Left cardiac atrium (tissue), 4 donors: ENCODE measurements at regions of chr4 and their contacts with region 1.

Region 1: DNA sequence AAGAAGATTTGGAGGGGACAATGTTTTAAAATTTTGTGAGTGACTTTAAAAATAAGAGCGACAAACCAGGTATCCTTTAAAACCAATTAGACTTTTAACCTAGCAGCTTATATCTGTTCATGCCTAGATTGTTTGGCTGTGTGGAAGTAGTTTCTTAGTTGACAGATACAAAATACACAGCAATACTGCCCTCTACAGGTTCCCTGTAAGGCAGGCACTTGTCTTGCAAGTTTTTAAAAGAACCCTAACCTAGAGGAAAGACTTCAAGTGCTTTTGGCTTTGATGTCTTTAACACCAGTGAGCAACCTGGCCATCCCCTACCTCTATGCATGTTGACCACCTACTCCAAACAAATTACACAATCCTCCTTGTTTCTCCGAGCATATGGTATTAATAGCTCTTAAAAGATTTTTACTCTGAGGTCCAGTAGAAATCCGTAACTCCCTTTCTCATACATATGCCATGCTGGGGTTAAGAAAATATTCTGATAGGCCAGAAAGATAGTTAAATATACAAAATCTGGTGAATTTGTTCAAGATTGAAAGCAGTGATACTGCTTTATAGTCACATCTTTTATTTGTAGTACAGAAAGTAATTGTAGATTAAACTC is 273.0 kb downstream of the ARHGAP24 start:
- DNase-seq: no peak
- ATAC-seq: peak; percentile 71

Region 2: GRCh38 chr4:84985952-84986351 is 762.0 kb before region 1 on chr4:
- intact Hi-C with region 1: no loop called
- DNase-seq: no peak
- ATAC-seq: no peak

Region 3: DNA sequence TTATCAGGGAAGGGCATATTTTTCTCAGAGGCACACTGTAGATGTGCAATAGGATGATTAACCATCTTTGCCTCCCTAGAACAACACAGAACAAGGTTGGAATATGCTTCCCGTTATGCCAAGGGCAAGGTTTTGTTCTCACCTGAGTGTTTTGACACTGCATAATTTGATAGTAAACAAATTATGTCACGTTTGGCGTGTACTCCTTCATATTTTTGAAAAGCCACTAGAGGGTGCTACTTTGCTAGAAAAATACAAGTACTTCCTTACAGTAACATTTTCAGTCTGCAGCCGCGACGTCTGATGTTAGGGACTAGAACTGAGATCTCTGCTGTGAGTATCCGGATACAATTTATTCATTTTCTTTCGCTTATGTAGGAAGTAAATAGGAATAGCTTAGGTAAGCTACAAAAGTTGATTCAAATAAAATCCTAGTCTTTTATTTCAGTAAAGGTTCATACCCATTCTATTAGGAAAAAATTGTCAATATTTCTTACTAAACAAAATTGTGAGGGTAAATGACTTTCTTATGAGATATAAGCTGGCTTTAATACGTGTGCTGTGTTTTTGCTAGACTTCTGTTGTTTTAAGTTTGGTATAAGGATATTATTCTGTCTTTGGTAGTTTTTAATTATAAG is 600.4 kb before region 1 on chr4:
- intact Hi-C with region 1: loop called in 1 of 2 experiments (anchors 5 kb)
- DNase-seq: peak; percentile 47
- ATAC-seq: peak; percentile 83 to 85

Region 4: DNA sequence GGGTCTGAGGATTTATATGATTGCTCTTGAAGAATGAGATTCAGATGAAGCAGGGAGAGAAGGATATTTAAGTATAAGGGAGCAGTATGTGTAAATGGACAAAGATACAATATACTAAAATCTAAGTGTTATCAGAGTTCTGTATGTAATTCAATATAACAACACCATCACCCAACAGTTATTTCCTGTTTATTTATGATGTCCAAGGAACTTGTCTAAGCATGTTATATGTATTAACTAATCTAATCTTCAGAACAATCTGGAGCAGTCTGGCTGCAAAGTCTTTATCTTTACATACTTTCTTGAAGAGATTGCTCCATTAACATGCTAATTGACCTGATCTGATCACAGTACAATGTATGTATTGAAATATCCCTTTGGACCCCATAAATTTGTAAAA is 577.7 kb before region 1 on chr4:
- intact Hi-C with region 1: no loop called
- DNase-seq: no peak
- ATAC-seq: no peak

Region 5: DNA sequence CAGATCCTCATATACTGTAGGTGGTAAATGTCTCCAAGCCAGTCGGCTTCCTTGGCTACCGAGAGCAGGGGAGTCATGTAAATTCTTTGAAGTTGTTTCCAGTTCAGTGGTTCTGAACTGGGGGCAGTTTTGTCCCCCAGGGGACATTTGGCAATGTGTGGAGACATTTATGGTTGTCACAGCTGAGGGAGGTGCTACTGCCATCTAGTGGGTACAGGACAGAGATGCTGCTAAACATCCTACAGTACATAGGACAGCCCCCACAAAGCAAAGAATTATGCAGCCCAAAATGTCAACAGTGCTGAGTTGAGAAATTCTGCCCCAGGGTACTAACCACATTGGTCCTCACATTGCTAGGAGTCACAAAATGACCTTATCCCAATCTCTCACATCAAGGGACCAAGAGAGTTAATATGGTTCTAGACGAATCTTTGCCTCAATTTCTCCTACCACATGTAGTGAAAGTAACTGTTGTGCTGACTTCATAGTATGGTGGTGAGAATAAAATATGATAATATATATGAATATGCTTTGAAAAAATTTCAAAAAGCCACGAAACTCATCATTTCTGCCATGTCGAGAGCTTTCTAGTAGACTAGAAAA is 377.5 kb before region 1 on chr4:
- intact Hi-C with region 1: loop called in 1 of 2 experiments (anchors 5 kb)
- DNase-seq: peak; percentile 22
- ATAC-seq: peak; percentile 74 to 75

Region 6: DNA sequence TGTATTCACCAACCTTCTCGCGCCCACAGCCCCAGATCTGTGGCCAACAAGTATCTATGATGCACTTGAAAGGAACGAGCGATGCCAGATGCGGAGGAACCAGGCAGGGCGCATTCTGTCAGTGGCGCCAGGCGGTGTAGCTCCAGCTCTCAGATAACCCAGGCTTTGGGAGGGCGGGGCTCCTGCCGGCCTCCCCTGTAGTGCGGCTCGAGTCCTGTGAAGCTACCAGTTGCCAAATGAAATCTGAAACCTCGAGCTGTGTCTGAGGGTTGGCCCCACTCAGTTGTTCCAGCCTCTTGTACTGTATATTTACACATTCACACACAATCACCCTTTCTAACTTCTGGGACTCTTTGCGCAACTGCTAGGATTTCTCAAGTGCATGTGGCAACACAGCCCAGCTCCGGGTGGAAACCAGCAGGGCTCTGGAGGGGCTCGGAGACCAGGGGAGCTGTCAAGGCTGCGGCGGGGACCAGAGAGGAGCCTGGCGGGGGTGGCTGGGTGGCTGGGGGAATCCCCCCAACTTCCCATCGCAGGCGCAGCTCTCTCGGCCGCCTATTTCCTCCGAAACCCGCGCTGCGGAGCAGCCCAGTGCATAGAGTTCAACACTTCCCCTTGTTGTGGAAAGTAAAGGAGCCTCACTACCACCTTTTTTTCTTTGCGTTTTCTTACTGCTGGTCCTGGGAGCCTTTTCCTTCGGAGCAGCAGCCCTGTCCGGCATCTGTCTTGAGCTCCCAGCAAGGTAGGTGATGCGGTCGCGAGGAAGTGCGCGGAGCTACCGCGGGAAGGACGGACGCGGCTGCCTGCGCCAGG is 273.0 kb before region 1 on chr4 and contains the start of gene ARHGAP24:
- intact Hi-C with region 1: loop called in 1 of 2 experiments (anchors 10 kb)
- DNase-seq: peak; percentile 89
- ATAC-seq: peak; percentile 97 to 99
- total RNA-seq, gene ARHGAP24: 30.2 to 38.3 TPM

Region 7: DNA sequence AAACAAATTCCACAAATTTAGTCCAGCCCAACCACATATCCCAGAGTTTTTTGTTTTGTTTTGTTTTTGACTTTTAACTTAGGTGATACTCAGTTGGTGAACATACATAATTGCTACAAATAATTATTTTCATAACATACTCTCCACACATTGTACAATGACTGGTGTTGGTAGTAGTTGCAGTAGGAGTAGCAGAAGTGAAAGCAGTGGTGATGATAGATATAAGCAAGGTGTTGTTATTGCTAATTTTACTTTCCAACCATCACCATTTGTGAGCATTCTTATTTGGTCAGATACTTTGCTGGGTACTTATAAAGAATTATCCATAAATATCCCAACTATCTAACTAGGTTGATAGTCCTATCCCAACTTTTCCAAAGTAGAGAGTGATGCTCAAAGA is 225.7 kb before region 1 on chr4:
- intact Hi-C with region 1: loop called in 1 of 2 experiments (anchors 10 kb)
- DNase-seq: no peak
- ATAC-seq: peak in 1 of 2 donors; percentile 30

Region 8: GRCh38 chr4:85591406-85592098 is 156.4 kb before region 1 on chr4:
- intact Hi-C with region 1: loop called in 1 of 2 experiments (anchors 10 kb)
- DNase-seq: no peak
- ATAC-seq: no peak

Region 9: DNA sequence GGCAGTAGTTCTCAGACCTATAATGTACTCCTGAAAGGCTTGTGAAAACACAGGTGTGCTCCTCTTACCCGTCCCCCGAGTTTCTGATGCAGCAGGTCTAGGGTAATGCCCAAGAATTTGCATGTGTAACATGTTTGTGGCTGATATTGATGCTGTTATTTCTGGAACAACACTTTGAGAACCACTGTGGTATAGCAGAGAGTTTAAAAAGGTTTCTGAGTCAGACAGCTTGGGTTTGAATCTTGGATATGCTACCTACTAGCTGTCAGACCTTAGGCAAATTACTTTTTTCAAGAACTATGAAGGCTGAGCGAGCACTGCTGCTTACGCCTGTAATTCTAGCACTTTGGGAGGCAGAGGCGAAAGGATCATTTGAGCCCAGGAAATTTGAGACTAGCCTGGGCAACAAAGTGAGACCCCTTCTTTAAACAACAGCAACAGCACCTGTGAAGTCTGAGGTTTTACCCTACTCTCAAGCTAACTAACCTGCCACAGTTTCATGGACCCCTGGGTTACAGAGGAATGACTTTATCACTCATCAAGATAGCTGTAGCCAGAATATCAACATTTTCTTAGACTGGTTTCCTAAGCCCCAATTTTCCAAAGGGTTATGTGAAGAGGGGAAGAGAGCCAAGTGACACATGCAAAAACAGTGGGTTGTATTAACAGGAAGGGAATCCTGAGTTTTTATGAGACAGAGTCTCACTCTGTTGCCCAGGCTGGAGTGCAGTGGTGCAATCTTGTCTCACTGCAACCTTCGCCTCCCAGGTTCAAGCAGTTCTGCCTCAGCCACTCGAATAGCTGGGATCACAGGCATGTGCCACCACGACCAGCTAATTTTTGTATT is 1192.0 kb after region 1 on chr4:
- intact Hi-C with region 1: no loop called
- DNase-seq: no peak
- ATAC-seq: no peak